GM13976 (cell line): ENCODE measurements at regions of chr9 and their contacts with region 1.

Region 1: DNA sequence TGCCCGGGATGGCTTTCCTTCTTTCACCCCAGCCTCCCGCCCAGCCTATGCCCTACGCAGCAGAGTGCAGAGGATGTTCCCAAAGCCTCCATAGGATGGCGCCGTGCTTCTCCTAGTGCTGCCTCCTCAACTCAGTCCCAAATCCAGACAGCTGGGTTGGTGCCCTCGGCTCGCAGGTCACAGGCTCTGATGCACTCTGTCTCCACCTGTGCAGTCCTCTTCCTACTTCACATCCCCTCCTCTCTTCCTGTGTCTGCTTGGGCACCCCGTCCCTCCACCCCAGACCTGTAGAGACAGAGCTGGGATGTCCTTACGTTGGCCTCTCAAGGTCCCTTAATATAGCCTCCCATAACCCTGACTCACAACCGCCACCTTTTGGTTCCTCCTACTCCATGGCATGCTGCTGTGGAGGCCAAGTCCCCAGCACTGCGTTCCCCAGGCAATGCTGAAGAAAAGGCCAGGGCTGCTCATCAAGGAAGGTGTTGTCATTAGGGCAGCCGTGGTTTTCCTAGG is 314.4 kb downstream of the GADD45G start:
- DNase-seq: peak; percentile 78
- CTCF ChIP-seq: peak; percentile 63

Region 2: DNA sequence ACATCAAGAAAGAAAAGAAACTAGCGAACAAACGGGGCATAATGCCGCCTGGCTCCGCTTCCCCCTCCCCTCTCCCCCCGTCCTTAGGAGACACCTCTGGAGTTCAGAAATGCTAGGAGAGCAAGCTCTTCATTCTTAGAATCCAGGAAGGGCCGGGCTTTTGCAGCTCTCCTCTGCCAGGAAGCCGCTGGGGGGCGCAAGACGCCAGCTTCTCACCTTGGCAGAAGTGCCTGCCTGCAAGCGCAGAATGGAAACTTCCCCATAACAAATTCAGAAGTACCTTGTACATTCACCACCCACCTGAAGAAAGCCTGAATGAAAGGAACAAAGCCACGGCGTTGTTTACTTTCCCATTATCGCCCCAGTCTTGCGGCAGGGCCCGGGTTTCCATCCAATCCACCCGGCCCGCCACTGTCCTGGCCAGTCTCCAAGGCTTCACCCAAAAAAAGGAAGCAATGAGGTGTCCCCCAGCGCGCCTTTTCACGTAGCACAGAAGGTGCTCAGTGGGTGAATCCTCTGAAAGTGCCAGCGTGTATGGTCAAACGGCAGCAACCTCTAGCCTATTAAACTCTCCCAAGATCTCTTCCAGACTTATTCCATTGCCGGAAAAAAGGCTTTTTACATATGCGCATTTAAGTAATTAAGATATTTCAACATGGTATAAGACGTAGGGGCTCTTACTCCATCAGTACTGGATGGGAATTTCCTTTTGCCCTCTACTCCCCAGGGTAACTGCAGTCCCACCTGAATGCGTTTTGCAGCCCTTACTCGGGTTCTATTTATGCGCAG is 316.1 kb before region 1 on chr9:
- in situ Hi-C with region 1: loop called (anchors 10 kb)
- DNase-seq: peak; percentile 83
- CTCF ChIP-seq: peak; percentile 92